ENCODE measurements at regions of chr6 and their contacts with region 1.

Region 1: GRCh38 chr6:122432816-122433215 is 33.4 kb downstream of the HSF2 start:
- DNase-seq: no peak
- H3K4me3 Mint-ChIP-seq: no peak overlapping the region
- H3K27ac Mint-ChIP-seq: no peak overlapping the region
- H3K4me1 Mint-ChIP-seq: peaks cover 16% of the 10 kb centered on the region
- H3K27me3 Mint-ChIP-seq: no peaks in the 10 kb centered on the region

Region 2: GRCh38 chr6:120785459-120786086 is 1647.2 kb before region 1 on chr6:
- CTCF ChIA-PET with region 1: no interaction called
- POLR2A ChIA-PET with region 1: no interaction called
- intact Hi-C with region 1: no loop called
- DNase-seq: no peak
- H3K4me3 Mint-ChIP-seq: no peak overlapping the region
- H3K27ac Mint-ChIP-seq: no peak overlapping the region
- H3K4me1 Mint-ChIP-seq: no peaks in the 10 kb centered on the region
- H3K27me3 Mint-ChIP-seq: no peaks in the 10 kb centered on the region

Region 3: GRCh38 chr6:122315842-122316241 is 117.0 kb before region 1 on chr6:
- CTCF ChIA-PET with region 1: no interaction called
- POLR2A ChIA-PET with region 1: no interaction called
- intact Hi-C with region 1: no loop called
- DNase-seq: no peak
- H3K4me3 Mint-ChIP-seq: no peak overlapping the region
- H3K27ac Mint-ChIP-seq: no peak overlapping the region
- H3K4me1 Mint-ChIP-seq: no peaks in the 10 kb centered on the region
- H3K27me3 Mint-ChIP-seq: peaks cover 1% of the 10 kb centered on the region

Region 4: DNA sequence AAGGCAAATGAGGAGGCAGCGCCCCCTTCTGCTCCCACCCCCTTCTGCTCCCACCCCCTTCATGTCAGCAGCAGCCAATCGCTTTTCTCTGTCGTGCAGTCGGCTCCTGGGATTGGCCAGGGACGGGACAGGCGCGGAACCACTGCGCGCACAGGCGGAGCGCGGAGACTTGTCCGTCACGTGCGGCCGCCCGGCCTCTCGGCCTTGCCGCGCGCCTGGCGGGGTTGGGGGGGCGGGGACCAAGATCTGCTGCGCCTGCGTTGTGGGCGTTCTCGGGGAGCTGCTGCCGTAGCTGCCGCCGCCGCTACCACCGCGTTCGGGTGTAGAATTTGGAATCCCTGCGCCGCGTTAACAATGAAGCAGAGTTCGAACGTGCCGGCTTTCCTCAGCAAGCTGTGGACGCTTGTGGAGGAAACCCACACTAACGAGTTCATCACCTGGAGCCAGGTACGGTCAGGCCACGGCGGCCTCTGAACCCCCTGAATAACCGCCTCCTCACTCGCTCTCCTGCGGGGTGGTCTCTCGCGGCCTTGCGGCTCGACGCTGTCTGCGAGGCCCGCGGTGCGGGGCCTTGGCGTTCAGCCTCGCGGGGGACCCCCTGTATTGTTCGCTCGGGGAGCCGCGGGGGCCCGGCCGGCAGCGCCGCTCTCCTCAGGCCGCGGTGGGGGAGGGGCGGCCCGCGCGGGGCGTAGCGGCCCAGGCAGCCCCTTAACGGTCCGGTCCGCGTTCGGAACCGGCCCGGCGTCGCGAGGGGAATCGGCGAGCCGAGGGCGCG is 33.2 kb before region 1 on chr6 and contains the start of gene HSF2:
- CTCF ChIA-PET with region 1: interaction called, 3 read pairs
- POLR2A ChIA-PET with region 1: no interaction called
- intact Hi-C with region 1: loop called (anchors 2 kb)
- DNase-seq: peak; percentile 97
- H3K4me3 Mint-ChIP-seq: peak within 1 kb of the TSS; percentile 95
- H3K27ac Mint-ChIP-seq: peak within 1 kb of the TSS; percentile 91
- H3K4me1 Mint-ChIP-seq: peaks cover 36% of the 10 kb centered on the region
- H3K27me3 Mint-ChIP-seq: no peaks in the 10 kb centered on the region
- total RNA-seq, gene HSF2: 16.0 to 18.5 TPM

Region 5: DNA sequence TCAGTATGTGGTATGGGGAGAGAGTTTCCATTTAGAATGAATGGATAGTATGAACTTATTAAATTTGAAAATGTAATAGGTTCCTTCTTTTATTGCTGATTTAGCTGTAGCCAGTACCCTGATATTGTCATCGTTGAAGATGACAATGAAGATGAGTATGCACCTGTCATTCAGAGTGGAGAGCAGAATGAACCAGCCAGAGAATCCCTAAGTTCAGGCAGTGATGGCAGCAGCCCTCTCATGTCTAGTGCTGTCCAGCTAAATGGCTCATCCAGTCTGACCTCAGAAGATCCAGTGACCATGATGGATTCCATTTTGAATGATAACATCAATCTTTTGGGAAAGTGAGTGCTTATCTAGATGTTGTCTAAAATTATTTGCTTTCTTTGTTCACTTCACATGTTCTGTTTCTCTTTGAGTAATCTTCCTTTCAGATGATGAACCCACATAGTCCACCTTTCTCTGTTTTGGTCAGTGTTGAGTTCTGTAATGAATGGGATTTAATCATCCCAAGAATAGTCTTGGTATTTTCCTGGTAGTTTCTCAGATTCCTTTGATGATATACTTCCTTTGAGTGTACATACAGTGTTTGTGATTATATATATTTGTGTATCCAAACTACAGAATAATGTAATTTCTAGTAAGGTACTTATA is 10.1 kb before region 1 on chr6:
- CTCF ChIA-PET with region 1: interaction called, 3 read pairs
- POLR2A ChIA-PET with region 1: no interaction called
- intact Hi-C with region 1: loop called (anchors 1 kb)
- DNase-seq: no peak
- H3K4me3 Mint-ChIP-seq: no peak overlapping the region
- H3K27ac Mint-ChIP-seq: no peak overlapping the region
- H3K4me1 Mint-ChIP-seq: peaks cover 7% of the 10 kb centered on the region
- H3K27me3 Mint-ChIP-seq: no peaks in the 10 kb centered on the region

Region 6: DNA sequence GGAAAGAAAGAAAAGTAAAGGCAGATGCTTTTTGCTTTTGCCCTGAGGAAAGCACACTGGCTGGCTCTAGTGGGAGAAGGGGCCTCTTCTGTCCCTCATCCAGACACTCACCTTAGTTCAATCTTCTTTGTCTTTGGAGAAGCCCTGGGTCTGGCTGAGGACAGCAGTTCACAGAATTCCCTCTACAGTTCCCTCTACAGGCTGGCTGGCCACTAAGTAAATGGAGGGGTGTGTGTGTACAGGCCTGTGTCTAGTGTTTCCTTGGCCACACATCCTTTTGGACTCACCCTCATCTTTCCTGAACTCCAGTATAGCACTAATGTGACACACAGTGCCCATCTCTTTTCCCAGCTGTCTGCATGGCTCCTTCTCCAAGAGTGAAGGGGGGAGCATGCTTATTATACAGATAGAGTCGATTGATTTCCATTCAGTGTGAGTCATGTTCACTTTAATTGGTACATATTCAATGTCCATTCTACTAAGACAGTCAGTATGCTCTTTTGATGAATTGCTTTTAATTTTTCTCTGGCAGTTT is 537.2 kb after region 1 on chr6:
- CTCF ChIA-PET with region 1: no interaction called
- POLR2A ChIA-PET with region 1: no interaction called
- intact Hi-C with region 1: no loop called
- DNase-seq: no peak
- H3K4me3 Mint-ChIP-seq: no peak overlapping the region
- H3K27ac Mint-ChIP-seq: no peak overlapping the region
- H3K4me1 Mint-ChIP-seq: no peaks in the 10 kb centered on the region
- H3K27me3 Mint-ChIP-seq: no peaks in the 10 kb centered on the region

Measured in activated CD4-positive, alpha-beta memory T cell treated with anti-CD3 and anti-CD28 coated beads for 36 hours (primary cell).